ENCODE measurements at regions of chr11 and their contacts with region 1.

Region 1: GRCh38 chr11:65817835-65818742 is 15.7 kb upstream of the SNX32 start:
- DNase-seq: peak; percentile 94 to 97 (median 96)
- ATAC-seq: peak; percentile 96
- H3K4me3 ChIP-seq: peak overlapping the region; percentile 49
- H3K27ac ChIP-seq: peak overlapping the region; percentile 34; the same call in 1 of the 3 replicates
- H3K4me1 ChIP-seq: peaks cover 0 to 17% of the 10 kb centered on the region in 2 experiments; a peak in 2 of 5 replicates
- H3K27me3 ChIP-seq: peaks cover 3 to 4% of the 10 kb centered on the region in 2 experiments; a peak in 1 of 5 replicates
- CTCF ChIP-seq: peak; percentile 95 to 99 (median 99)
- EP300 ChIP-seq: no peak
- POLR2A ChIP-seq: no peak
- RAD21 ChIP-seq: peak; percentile 94 to 95

Region 2: DNA sequence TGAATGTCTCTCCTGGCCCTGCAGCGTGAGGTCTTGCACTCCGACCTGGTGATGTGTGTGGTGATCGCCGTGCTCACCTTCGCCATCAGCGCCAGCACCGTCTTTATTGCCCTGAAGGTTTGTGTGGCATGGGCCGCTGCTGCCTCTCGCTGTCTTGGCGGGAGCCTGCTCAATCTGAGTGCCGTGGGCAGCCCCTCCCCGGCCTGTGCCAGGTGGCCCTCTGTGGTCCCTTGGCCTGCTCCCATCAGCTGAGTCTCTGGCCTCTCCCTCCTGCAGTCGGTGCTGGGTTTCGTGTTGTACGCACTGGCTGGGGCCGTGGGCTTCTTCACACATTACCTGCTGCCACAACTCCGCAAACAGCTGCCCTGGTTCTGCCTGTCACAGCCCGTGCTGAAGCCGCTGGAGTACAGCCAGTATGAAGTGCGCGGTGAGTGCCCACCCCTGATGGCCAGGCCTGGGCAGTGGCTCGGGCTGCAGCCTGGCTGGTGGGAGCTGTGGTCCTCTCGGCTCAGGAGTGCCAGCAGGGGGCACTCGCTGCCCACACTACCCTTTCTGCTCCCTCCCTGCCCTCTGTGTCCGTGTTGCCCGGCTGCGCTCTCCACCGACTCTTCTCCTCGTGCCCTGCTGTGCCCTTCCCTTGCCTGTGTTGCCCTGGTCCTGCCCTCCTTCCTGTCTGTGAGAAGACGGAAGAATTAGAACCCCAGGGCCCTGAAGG is 192.3 kb before region 1 on chr11:
- CTCF ChIA-PET with region 1: interaction called, 27 read pairs
- POLR2A ChIA-PET with region 1: no interaction called
- in situ Hi-C with region 1: no loop called
- intact Hi-C with region 1: no loop called
- DNase-seq: peak in 3 of 4 experiments; percentile 32 to 46 (median 39)
- ATAC-seq: peak; percentile 81
- H3K4me3 ChIP-seq: no peak overlapping the region
- H3K27ac ChIP-seq: no peak overlapping the region
- H3K4me1 ChIP-seq: peaks cover 0 to 28% of the 10 kb centered on the region in 2 experiments; a peak in 1 of 5 replicates
- H3K27me3 ChIP-seq: no peaks in the 10 kb centered on the region
- CTCF ChIP-seq: peak; percentile 60 to 62 (median 61)
- EP300 ChIP-seq: no peak
- POLR2A ChIP-seq: no peak
- RAD21 ChIP-seq: peak; percentile 52 to 58

Region 3: DNA sequence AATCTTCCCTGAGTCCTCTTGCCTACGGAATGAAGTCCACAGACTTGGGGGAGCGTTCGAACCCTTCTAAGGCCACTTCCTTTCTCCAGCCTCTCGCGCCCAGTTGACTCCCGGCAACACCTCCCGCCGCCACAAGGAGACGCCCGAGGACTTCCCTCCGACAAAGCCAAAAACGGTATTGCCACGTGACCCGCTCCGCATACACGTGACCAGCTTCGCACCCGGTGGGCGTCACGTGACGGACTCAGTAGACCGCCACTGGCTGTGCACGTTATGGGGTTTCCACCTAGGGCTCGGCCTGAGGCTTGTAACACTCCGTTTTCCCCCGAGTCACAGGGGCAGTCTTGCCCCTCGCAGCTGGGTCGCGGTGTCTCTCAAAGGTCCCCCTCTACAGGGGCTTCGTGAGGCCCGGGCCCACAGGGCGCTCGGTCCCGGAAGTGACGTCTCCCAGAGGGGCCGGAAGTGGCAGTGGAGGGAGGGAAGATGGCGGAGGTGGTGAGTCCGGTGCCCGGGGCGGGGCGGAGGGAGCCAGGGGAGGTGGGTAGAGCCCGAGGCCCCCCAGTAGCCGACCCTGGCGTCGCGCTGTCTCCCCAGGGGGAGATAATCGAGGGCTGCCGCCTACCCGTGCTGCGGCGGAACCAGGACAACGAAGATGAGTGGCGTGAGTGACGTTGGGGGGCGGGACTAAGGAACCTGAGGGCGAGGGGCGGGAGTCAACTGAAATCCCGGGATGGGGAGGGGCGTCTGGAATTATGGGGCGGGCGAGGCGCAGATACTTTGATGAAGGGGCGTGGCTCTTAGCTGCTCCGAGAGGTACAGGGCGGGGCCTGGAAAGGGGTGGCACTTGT is 106.1 kb before region 1 on chr11 and contains the start of gene KAT5:
- CTCF ChIA-PET with region 1: interaction called, 45 read pairs
- POLR2A ChIA-PET with region 1: interaction called, 7 read pairs
- in situ Hi-C with region 1: loop called (anchors 5 kb)
- intact Hi-C with region 1: loop called (anchors 1 kb)
- DNase-seq: peak; percentile 93 to 99 (median 95)
- ATAC-seq: peak; percentile 93
- H3K4me3 ChIP-seq: peak within 1 kb of the TSS; percentile 59
- H3K27ac ChIP-seq: peak within 1 kb of the TSS; percentile 98
- H3K4me1 ChIP-seq: peaks cover 17 to 28% of the 10 kb centered on the region in 2 experiments
- H3K27me3 ChIP-seq: no peaks in the 10 kb centered on the region
- CTCF ChIP-seq: peak; percentile 97 to 99 (median 98)
- EP300 ChIP-seq: 0 out of 2 replicates have a peak, but pooled peaks have one; percentile 34
- POLR2A ChIP-seq: peak; percentile 93
- RAD21 ChIP-seq: peak; percentile 96 to 97
- polyA plus RNA-seq, gene KAT5: 3.6 to 12.9 TPM

Region 4: DNA sequence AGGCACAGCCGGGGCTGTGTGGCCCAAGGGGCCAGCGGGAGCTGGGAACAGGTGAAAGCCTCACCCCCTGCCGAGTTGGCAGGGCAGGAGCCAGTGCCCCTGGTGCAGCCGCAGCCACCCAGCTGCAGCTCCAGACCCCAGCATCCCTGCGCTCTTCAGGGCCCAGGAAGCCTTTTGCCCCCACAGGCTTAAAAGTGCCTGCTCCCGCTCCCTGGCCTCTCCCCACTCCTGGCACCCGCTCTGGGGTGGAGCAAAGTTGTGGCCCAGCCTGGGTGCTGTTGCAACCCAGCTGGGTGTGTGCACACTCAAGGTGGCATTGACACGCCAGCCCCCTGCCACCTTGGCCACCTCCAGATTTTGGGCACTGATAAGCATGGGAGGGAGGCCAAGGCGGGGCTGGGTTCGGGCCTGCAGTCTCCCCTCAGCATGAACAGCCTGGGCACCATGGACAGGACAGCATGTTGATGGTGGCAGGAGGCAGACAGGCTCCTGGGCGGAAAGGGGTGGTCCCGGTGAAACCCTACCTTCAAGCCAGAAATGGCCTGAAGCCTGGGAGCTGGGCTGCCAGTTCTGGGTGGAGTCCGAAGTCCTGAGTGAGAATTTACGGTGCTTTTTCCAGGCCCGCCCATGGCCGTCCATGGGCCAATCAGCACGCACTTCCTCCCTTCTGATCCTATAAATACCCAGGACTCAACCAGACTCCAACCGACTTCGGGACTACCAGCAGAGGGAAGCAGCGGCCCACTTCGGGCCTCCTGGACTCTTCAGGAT is 74.0 kb before region 1 on chr11:
- CTCF ChIA-PET with region 1: interaction called, 9 read pairs
- POLR2A ChIA-PET with region 1: no interaction called
- in situ Hi-C with region 1: no loop called
- intact Hi-C with region 1: loop called (anchors 1 kb)
- DNase-seq: peak; percentile 32 to 67 (median 52)
- ATAC-seq: peak; percentile 99
- H3K4me3 ChIP-seq: no peak overlapping the region
- H3K27ac ChIP-seq: no peak overlapping the region
- H3K4me1 ChIP-seq: peaks cover 4 to 15% of the 10 kb centered on the region in 2 experiments; a peak in 3 of 5 replicates
- H3K27me3 ChIP-seq: peaks cover 9 to 19% of the 10 kb centered on the region in 2 experiments; a peak in 4 of 5 replicates
- CTCF ChIP-seq: peak; percentile 64 to 90 (median 78)
- EP300 ChIP-seq: no peak
- POLR2A ChIP-seq: no peak
- RAD21 ChIP-seq: peak; percentile 28 to 83; a peak in 3 of 4 replicates

Region 5: GRCh38 chr11:65850831-65851811 is 33.0 kb after region 1 on chr11:
- CTCF ChIA-PET with region 1: no interaction called
- POLR2A ChIA-PET with region 1: interaction called, 18 read pairs
- in situ Hi-C with region 1: no loop called
- intact Hi-C with region 1: no loop called
- DNase-seq: peak; percentile 53 to 75 (median 66)
- ATAC-seq: peak; percentile 60
- H3K4me3 ChIP-seq: no peak overlapping the region
- H3K27ac ChIP-seq: no peak overlapping the region
- H3K4me1 ChIP-seq: peaks cover under 1 to 31% of the 10 kb centered on the region in 2 experiments; a peak in 3 of 5 replicates
- H3K27me3 ChIP-seq: no peaks in the 10 kb centered on the region
- CTCF ChIP-seq: peak; percentile 50 to 83 (median 54)
- EP300 ChIP-seq: no peak
- POLR2A ChIP-seq: no peak
- RAD21 ChIP-seq: peak in 1 of 2 experiments; percentile 19; a peak in 1 of 4 replicates

Region 6: GRCh38 chr11:65927904-65928397 is 109.9 kb after region 1 on chr11:
- CTCF ChIA-PET with region 1: no interaction called
- POLR2A ChIA-PET with region 1: no interaction called
- in situ Hi-C with region 1: no loop called
- intact Hi-C with region 1: no loop called
- DNase-seq: peak; percentile 14 to 64 (median 36)
- ATAC-seq: peak; percentile 52
- H3K4me3 ChIP-seq: no peak overlapping the region; the same call in 1 of the 2 replicates
- H3K27ac ChIP-seq: peak overlapping the region; percentile 47
- H3K4me1 ChIP-seq: peaks cover 23 to 42% of the 10 kb centered on the region in 2 experiments; a peak in 4 of 5 replicates
- H3K27me3 ChIP-seq: no peaks in the 10 kb centered on the region
- CTCF ChIP-seq: no peak
- EP300 ChIP-seq: no peak
- POLR2A ChIP-seq: no peak
- RAD21 ChIP-seq: no peak

Measured in K562 (cell line).